H1 (cell line): ENCODE measurements at regions of chr10 and their contacts with region 1.

Region 1: GRCh38 chr10:3090914-3091787 is 23.8 kb downstream of the PFKP start:
- DNase-seq: no peak
- H3K4me3 ChIP-seq: no peak overlapping the region
- H3K27ac ChIP-seq: no peak overlapping the region
- H3K4me1 ChIP-seq: peaks cover 3 to 8% (median 6%) of the 10 kb centered on the region in 4 experiments
- H3K27me3 ChIP-seq: no peaks in the 10 kb centered on the region
- CTCF ChIP-seq: no peak
- EP300 ChIP-seq: no peak
- POLR2A ChIP-seq: no peak
- RAD21 ChIP-seq: no peak

Region 2: DNA sequence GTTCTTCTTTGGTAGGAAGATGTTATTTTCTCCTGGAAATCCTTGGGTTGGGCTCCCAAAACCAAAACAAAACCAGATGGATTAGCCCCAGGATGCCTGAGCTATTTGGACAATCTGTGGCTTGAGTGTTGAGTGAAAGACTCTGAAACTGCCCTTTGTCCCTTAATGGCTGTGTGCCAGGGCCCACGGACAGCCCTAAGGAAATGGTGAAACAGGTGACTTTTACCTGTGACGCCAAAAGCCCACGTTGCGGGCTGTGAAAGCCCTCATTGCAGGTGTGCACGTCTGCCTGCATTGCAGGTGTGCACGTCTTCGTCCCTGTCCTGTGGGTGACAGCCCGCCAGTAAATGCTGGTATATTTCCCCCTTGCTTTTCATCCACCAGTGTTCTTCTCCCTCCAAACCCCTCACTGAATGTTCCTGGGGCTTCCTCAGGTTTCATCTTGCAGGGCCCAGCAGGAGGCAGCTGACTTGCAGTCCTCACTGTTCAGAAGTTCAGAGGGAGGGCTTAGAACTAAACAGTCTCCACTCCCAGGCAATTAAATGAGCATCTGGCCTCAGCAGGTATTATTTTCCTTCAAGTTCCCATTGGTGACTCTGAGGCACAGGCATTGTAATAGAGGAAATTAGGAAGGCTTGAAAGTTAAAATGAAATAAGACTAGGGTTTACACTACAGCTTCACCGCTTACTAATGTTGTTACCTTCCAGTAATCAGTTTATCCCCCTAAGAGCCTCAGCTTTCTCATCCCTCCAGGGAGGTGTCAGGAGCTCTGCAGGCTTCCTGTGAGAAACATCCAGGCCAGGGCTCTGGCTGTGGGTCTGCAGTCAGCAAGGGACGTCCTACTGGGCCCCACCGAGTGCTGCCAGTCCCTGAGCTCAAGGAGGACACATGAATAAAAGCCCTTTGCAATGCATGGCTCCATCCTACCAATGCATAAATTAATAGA is 12.9 kb before region 1 on chr10:
- CTCF ChIA-PET with region 1: interaction called, 4 read pairs
- POLR2A ChIA-PET with region 1: interaction called, 19 read pairs
- DNase-seq: no peak
- H3K4me3 ChIP-seq: peak overlapping the region in 1 of 4 experiments; percentile 4; a peak in 1 of 8 replicates
- H3K27ac ChIP-seq: no peak overlapping the region
- H3K4me1 ChIP-seq: peaks cover 7 to 20% (median 12%) of the 10 kb centered on the region in 4 experiments
- H3K27me3 ChIP-seq: no peaks in the 10 kb centered on the region
- CTCF ChIP-seq: no peak
- EP300 ChIP-seq: no peak
- POLR2A ChIP-seq: no peak
- RAD21 ChIP-seq: no peak